ENCODE measurements at regions of chr5 and their contacts with region 1.

Region 1: GRCh38 chr5:141512390-141512910 is 23.6 kb downstream of the PCDHGC5 start:
- DNase-seq: peak; percentile 67 to 88 (median 79)
- H3K4me3 ChIP-seq: peak overlapping the region; percentile 65
- H3K4me3 Mint-ChIP-seq: peak overlapping the region; percentile 74 to 88 (median 85)
- H3K27ac ChIP-seq: no peak overlapping the region
- H3K27ac Mint-ChIP-seq: peak overlapping the region in 4 of 8 donors; percentile 27 to 74 (median 65)
- H3K4me1 ChIP-seq: peaks cover 23% of the 10 kb centered on the region
- H3K4me1 Mint-ChIP-seq: peaks cover 27 to 39% (median 33%) of the 10 kb centered on the region in 3 donors
- H3K27me3 ChIP-seq: no peaks in the 10 kb centered on the region
- H3K27me3 Mint-ChIP-seq: peaks cover 0 to 1% of the 10 kb centered on the region in 2 donors

Region 2: DNA sequence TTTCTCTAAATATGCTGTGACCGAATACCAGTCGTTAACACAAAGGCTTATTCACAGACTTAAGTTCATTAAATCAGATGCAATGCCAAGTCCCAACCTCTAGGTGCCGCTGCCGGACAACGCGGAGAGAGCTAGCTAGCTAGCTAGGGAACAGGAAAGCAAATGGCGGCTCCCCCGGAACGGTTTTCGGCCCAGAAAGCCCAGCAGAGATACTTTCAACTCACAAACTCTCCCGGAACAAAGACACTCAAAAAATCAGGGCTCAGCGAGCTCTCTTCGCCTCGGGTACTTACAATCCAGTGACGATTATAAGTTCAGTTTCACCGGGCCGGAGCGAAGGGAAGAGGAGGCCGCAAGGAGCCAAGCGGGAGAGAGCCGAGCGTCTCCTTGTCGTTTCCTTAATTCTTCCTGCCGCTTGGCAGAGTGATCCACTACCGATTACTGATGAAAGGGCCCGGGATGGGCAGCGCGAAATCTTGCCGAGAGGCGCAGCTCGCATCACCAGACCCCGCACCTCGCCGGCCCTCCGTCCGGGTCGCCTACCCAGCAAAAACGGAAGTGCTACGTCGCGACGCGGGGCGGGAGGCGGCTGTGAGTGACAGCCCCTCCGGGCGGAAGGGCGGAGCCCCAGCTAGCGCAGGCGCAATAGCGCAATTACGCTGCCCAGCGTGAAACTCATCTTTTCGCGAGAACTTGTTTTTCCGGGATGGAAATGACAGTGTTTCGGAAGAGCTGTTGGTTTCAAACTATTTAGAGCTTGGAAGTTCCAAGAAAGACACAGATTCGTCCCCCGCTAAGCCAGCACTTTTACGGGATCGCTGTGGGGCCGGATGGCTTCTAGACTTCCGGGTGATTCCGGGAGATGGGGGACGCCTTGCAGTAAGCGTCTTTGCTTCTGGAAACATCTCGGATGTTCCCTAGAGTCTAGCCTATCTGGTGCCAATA is 192.0 kb before region 1 on chr5 and contains the start of gene TAF7:
- CTCF ChIA-PET with region 1: interaction called, 35 read pairs
- POLR2A ChIA-PET with region 1: interaction called, 5 read pairs
- DNase-seq: peak; percentile 89 to 95 (median 90)
- H3K4me3 ChIP-seq: peak within 1 kb of the TSS; percentile 96
- H3K4me3 Mint-ChIP-seq: peak within 1 kb of the TSS; percentile 91 to 99 (median 95)
- H3K27ac ChIP-seq: peak within 1 kb of the TSS; percentile 97
- H3K27ac Mint-ChIP-seq: peak within 1 kb of the TSS; percentile 95 to 99 (median 99)
- H3K4me1 ChIP-seq: peaks cover 16% of the 10 kb centered on the region
- H3K4me1 Mint-ChIP-seq: peaks cover 26 to 48% (median 31%) of the 10 kb centered on the region in 3 donors
- H3K27me3 ChIP-seq: no peaks in the 10 kb centered on the region
- H3K27me3 Mint-ChIP-seq: peaks cover 4% of the 10 kb centered on the region in 2 donors
- total RNA-seq, gene TAF7: 70.9 to 72.2 TPM

Region 3: GRCh38 chr5:141524604-141525597 is 12.5 kb after region 1 on chr5:
- CTCF ChIA-PET with region 1: interaction called, 67 read pairs
- POLR2A ChIA-PET with region 1: no interaction called
- DNase-seq: peak; percentile 40 to 58 (median 46)
- H3K4me3 ChIP-seq: no peak overlapping the region
- H3K4me3 Mint-ChIP-seq: peak overlapping the region in 1 of 7 donors; percentile 57
- H3K27ac ChIP-seq: no peak overlapping the region
- H3K27ac Mint-ChIP-seq: peak overlapping the region in 7 of 8 donors; percentile 61 to 86 (median 72)
- H3K4me1 ChIP-seq: no peaks in the 10 kb centered on the region
- H3K4me1 Mint-ChIP-seq: peaks cover 10 to 21% (median 13%) of the 10 kb centered on the region in 3 donors
- H3K27me3 ChIP-seq: no peaks in the 10 kb centered on the region
- H3K27me3 Mint-ChIP-seq: peaks cover 0 to 3% of the 10 kb centered on the region in 2 donors

Region 4: DNA sequence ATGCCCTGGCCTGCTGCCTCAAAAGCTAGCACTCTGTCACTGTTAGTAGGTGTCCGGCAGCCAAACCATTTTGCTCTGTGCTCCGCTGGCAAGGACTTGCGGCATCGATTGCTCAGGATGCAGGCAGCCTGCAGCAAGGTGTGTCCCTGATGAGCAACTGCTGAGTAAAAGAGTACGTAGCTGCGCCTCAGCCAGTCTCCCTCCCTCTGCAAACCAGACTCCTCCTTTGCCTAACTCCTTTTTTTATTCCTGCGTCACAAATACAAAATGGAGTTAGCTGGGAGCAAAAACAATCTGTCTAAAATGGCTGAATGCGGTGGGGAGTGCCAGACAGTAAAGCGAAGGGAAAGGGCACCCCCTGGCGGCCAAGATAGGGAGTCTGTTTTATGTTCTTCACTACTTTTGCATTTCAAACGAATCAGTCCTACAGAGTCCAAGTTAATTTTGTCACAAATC is 45.3 kb after region 1 on chr5:
- CTCF ChIA-PET with region 1: interaction called, 12 read pairs
- POLR2A ChIA-PET with region 1: no interaction called
- DNase-seq: peak; percentile 65 to 79 (median 71)
- H3K4me3 ChIP-seq: no peak overlapping the region
- H3K4me3 Mint-ChIP-seq: peak overlapping the region in 1 of 7 donors; percentile 1
- H3K27ac ChIP-seq: no peak overlapping the region
- H3K27ac Mint-ChIP-seq: peak overlapping the region; percentile 77 to 93 (median 87)
- H3K4me1 ChIP-seq: peaks cover 3% of the 10 kb centered on the region
- H3K4me1 Mint-ChIP-seq: peaks cover 35 to 63% (median 49%) of the 10 kb centered on the region in 3 donors
- H3K27me3 ChIP-seq: no peaks in the 10 kb centered on the region
- H3K27me3 Mint-ChIP-seq: no peaks in the 10 kb centered on the region

Measured in CD8-positive, alpha-beta memory T cell (primary cell).